Activated T-helper 1 cell treated with anti-CD3 and anti-CD28 coated beads, Interleukin-12 subunit alpha, Interleukin-12 subunit beta, Interleukin-2, Interleukin-4 antibody, amounts not matched to agents 30 ng/mL and 10 ng/mL and 1 ng/mL, durations not matched to agents 14 hours and 24 hours and 36 hours (primary cell): ENCODE measurements at regions of chr6 and their contacts with region 1.

Region 1: DNA sequence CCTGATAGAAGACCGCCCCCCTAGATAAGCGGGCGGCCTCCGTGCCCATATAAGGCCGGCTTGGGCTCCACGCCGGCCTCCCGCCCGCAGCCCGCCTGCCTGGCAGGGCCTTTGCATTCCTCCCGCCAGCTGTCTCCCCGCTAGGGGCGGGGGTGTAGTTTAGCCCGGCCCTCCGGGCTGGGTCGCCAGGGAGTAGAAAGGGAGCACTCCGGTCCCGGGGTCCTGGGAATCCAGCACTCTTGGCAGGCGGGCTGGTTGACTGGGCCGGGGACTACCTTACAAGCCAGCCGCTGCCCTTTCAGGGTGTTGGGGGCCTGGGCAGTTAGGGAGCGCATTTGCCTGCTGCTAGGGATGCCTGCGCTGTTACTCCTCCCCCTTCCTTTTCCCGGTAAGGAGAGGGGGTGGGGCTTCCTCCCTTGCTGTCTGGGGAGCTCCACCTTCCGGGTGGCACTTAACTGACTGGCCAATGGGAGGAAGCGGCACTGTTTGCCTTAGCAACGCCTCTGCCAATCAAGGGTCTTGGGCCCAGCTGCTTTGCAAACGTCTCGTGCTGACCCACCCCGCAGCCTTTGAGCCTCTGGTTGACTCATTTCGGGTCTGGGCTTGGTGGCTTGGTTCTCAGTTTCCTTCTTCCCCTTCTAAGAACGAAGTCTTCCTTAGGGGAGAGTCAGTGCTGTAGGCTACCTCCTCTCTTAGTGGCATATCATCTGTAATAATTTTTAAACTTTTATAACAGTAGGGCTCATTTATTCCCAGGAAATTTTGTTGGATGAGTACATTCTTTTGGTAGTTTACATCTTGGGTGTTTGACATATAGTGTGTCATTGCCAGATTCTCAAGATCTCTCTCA is 3.4 kb downstream of the SRF start:
- DNase-seq: peak; percentile 96
- H3K4me3 Mint-ChIP-seq: peak overlapping the region; percentile 94
- H3K27ac Mint-ChIP-seq: peak overlapping the region; percentile 82
- H3K4me1 Mint-ChIP-seq: peaks cover 44% of the 10 kb centered on the region
- H3K27me3 Mint-ChIP-seq: peaks cover 2% of the 10 kb centered on the region

Region 2: DNA sequence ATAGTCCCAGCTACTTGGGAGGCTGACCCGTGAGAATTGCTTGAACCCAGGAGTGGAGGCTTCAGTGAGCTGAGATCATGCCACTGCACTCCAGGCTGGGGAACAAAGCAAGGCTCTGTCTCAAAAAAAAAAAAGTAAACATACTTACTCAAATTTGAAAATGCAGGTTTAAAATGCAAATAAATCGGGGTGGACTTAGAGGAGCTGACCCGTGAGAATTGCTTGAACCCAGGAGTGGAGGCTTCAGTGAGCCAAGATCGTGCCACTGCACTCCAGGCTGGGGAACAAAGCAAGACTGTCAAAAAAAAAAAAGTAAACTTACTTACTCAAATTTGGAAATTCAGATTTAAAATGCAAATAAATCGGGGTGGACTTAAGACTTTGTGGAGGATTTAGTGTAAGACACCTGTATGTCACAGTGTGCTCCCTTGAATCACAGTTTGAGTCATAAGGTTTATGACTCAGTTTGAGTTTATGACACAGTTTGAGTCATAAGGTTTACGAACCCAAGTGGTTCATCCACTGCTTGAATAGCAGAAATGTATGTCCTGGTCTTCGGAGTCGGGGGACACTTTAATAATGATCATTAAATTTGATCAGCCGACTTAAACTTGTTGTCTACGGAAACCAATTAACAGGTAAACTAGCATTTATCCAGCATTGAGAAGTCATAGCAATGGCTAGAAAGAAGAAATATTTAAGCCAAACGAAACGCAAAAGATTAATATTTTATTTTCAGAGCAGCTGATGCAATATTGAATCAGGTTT is 950.1 kb before region 1 on chr6:
- intact Hi-C with region 1: loop called (anchors 5 kb)
- DNase-seq: no peak
- H3K4me3 Mint-ChIP-seq: peak overlapping the region; percentile 61
- H3K27ac Mint-ChIP-seq: peak overlapping the region; percentile 85
- H3K4me1 Mint-ChIP-seq: peaks cover 18% of the 10 kb centered on the region
- H3K27me3 Mint-ChIP-seq: no peaks in the 10 kb centered on the region

Region 3: DNA sequence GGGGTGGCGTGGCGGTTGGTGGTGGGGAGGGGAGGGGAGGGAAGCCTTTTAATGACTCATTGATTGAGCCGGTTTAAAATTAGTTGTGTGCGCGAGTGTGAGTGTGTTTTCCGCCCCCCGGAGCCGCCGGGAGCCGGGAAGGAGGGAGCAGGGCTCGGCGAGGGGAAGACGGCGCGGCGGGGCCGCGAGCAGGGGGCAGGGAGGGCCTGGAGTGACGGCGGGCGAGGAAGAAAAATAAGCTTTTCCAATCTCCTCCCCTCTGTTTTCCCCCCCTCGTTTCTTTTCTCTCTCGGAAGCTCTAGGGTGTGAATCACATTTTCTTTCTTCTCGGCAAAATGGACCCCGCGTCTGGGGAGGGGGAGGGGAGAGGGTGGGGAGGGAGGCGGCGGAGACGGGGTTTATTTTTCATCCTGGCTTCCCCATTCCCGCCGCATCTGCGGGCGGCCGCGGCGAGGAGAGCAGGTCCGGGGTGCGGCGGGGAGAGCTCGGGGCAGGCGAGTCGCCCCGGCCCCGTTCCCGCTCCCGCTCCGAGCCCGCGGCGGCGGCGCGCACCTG is 391.8 kb before region 1 on chr6:
- intact Hi-C with region 1: loop called (anchors 5 kb)
- DNase-seq: peak; percentile 48
- H3K4me3 Mint-ChIP-seq: peak overlapping the region; percentile 96
- H3K27ac Mint-ChIP-seq: peak overlapping the region; percentile 98
- H3K4me1 Mint-ChIP-seq: peaks cover 28% of the 10 kb centered on the region
- H3K27me3 Mint-ChIP-seq: no peaks in the 10 kb centered on the region

Region 4: DNA sequence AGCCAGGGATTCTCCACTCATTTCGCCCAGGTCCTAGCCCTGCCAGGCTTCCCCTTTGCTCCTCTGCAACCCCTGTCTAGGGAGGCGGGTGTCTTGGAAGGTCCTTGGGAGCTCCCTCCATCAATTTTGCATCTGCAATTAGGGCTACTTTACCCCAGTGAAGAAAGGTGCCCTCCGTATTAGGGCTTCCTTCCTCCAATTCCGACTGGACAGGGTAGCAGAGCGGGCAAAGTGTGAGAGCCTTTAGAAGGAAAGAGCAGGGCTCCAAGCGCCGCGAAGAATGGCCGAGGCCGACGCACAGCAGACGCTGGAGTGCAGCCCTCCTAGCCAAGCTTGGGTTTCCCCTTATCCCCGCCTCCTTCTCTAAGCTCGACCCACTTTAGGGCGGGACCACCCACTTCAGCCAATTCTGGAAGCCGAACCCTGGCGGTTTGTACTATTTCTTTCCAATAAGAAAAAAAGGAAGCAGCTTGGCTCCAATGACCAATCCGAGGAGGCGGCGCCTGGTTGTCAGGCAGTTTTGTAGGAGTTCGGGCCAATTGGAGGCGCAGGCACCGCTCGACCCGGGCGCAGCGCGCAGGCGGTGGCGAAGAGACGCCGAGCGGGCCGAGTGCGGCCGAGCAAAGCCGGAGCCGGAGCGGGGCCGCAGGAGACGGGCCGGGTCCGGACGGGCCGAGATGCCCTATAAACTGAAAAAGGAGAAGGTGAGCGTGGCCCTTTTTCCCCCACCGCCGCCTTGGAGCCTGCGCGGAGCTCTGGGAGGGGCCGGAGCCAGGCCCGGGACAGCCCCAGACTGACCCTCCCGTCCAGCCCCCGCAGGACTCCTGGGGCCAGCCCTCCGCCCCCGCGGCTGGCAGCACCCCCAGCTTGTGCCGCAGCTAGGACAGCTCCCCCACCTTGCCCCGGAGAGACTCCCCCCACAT is 190.2 kb before region 1 on chr6 and contains the start of gene PPP2R5D:
- intact Hi-C with region 1: loop called (anchors 1 kb)
- DNase-seq: peak; percentile 97
- H3K4me3 Mint-ChIP-seq: peak within 1 kb of the TSS; percentile 92
- H3K27ac Mint-ChIP-seq: peak within 1 kb of the TSS; percentile 94
- H3K4me1 Mint-ChIP-seq: peaks cover 57% of the 10 kb centered on the region
- H3K27me3 Mint-ChIP-seq: no peaks in the 10 kb centered on the region
- total RNA-seq, gene PPP2R5D: 52.1 and 53.4 TPM in 2 replicates

Region 5: GRCh38 chr6:43120944-43121913 is 53.3 kb before region 1 on chr6:
- intact Hi-C with region 1: no loop called
- DNase-seq: no peak
- H3K4me3 Mint-ChIP-seq: no peak overlapping the region
- H3K27ac Mint-ChIP-seq: no peak overlapping the region
- H3K4me1 Mint-ChIP-seq: no peaks in the 10 kb centered on the region
- H3K27me3 Mint-ChIP-seq: peaks cover 4% of the 10 kb centered on the region

Region 6: DNA sequence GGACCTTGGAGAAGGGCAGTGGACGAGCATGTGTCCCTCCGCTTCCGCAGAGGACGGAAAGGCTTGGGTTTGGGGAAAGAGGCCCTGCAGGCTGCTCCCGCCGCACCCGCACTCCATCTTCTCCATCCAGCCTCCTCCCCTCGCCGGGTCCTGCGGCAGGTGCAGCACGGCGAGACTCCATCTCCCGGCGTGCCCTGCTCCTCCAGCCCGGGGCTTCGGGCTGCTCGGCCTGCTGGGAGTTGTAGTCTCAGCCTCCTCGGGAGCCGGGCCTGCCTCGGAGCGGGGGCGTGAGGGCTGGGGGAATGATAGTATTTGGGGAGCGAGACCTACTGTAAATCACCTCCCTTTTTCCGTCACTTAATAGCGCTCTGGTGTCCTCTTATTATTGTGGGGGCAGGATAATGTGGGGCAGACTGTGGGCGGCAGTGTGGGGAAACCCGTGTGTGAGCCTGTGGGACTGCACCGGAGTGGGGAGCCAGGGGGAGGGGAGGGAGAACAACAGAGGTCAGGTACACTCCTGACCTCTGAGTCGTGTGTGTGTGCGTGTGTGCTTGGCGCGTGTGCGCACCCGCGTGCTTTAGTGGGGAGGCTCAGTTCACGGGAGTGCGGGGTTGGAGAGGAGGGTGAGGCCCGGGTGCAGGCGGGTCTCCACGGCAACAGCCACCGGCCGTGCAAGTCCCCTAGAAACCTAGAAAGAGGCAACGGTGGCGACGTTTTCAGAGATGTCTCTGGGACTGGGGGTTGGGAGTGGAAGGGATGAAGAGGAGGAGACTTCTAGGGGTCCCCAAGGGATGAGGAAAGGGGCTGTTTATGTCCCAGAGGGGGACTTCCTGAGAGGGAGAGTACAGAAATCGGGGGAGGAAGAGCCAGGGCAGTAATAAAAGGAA is 72.9 kb after region 1 on chr6:
- intact Hi-C with region 1: loop called (anchors 1 kb)
- DNase-seq: peak; percentile 77
- H3K4me3 Mint-ChIP-seq: peak overlapping the region; percentile 77
- H3K27ac Mint-ChIP-seq: peak overlapping the region; percentile 85
- H3K4me1 Mint-ChIP-seq: peaks cover 21% of the 10 kb centered on the region
- H3K27me3 Mint-ChIP-seq: peaks cover 17% of the 10 kb centered on the region

Region 7: GRCh38 chr6:43477235-43478007 is 302.9 kb after region 1 on chr6 and contains the start of gene TJAP1:
- intact Hi-C with region 1: loop called (anchors 5 kb)
- DNase-seq: peak; percentile 94
- H3K4me3 Mint-ChIP-seq: peak within 1 kb of the TSS; percentile 97
- H3K27ac Mint-ChIP-seq: peak within 1 kb of the TSS; percentile 97
- H3K4me1 Mint-ChIP-seq: peaks cover 33% of the 10 kb centered on the region
- H3K27me3 Mint-ChIP-seq: no peaks in the 10 kb centered on the region
- total RNA-seq, gene TJAP1: 43.4 and 48.2 TPM in 2 replicates

Region 8: GRCh38 chr6:43984442-43985321 is 810.2 kb after region 1 on chr6:
- intact Hi-C with region 1: no loop called
- DNase-seq: no peak
- H3K4me3 Mint-ChIP-seq: no peak overlapping the region
- H3K27ac Mint-ChIP-seq: no peak overlapping the region
- H3K4me1 Mint-ChIP-seq: no peaks in the 10 kb centered on the region
- H3K27me3 Mint-ChIP-seq: peaks cover 6% of the 10 kb centered on the region